Right ventricle myocardium superior (tissue), 1 donor: ENCODE measurements at regions of chr4 and their contacts with region 1.

Region 1: DNA sequence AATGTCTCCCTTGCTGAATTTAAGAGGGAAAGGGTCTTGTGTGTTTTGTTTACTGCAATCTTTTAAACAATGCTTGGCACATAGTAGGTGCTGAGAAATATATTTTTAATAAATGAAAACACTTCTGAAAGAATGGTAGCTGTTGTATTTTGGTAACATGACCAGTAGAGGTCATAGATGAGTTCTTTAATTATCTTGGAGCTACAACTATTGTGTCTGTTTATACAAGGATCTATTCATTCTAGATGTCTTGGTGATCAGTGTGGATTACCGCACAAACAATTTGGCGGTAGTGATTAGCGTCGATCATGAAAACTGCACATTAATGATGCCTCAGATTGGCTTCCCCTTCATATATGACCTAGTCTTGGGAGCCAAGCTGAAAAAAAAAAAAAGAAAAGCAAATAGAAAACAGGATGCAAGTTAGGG is 21.4 kb upstream of the SCRG1 start:
- DNase-seq: no peak
- ATAC-seq: peak; percentile 54

Region 2: GRCh38 chr4:173318648-173319211 is 101.6 kb before region 1 on chr4:
- intact Hi-C with region 1: loop called (anchors 2 kb)
- DNase-seq: no peak
- ATAC-seq: peak; percentile 69

Region 3: DNA sequence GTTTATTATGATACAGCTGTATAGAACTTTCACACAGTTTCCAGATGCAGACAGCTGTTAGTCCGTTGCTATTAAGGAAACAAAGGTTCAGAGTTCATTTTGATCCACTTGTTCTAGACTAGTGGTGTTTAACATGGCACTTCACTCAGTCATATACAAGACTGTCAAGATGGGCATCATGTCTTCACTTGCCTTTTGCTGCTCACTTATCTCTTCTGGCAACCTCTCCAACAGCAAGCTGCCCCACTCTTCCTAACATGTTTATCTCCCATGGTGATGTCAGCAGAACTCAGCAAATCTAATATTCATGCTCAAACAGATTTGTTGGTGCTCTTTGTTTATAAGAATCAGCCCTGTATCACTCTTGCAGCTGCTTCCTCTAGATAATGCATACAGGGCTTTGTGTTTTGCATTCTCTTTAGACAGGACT is 345.8 kb after region 1 on chr4:
- intact Hi-C with region 1: no loop called
- DNase-seq: no peak
- ATAC-seq: no peak